ENCODE measurements at regions of chrX and their contacts with region 1.

Region 1: GRCh38 chrX:22748093-22748999 is 251.4 kb upstream of the DDX53 start:
- DNase-seq: peak; percentile 28
- CTCF ChIP-seq: peak; percentile 46

Region 2: DNA sequence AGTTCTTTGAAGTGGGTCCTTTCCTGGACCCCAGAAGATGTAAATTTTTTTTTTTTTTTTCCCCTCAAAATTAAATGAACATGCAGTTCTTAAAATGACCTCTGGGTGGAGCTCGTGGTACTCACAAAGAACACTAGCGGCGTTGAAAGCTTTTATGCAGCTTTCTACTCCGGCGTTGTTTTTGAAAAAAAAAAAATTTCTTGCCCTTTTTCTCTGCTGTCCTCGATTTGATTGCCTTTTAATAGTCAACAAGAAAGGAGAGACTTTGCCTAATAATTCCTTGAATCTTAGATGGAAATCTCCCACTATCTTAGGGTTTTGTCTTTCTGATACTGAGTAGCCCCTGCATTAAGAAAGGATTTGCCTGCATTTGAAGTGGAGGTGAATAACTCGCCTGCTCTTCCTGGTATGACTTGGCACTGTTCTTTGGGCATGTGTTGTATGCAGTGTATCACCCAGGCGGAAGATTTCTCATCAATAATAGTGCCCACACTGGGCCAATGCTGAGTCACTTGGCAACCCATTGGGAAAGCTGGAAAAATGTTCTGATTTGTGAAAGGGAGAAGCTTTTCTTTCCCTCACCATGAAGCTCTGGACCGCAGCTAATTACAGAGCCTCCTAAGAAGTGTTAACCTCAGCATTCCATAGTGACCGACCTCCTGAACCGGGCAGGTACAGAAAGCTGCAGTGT is 612.2 kb before region 1 on chrX:
- CTCF ChIA-PET with region 1: interaction called, 26 read pairs
- POLR2A ChIA-PET with region 1: no interaction called
- DNase-seq: peak; percentile 25
- CTCF ChIP-seq: peak; percentile 31

Region 3: DNA sequence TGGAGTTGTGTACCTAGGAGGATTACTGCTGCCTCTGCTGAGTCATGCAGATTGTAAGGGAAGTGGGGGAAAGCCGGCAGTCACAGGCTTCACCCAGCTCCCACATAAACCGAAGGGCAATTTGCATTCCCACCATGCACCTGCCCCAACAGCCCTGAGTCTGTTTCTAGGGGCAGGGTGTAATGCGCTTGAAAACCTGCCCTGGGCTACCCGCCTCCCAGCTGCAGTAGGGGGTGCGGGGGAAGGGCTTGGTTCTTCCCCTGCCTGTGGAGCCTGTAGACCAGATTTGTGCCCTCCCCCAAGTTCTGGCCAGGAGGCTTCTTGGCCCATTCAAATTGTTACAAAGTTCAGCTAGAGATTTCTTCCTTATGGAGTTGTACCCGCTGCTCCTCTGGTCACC is 17.8 kb before region 1 on chrX:
- CTCF ChIA-PET with region 1: interaction called, 11 read pairs
- POLR2A ChIA-PET with region 1: no interaction called
- DNase-seq: no peak
- CTCF ChIP-seq: no peak

Region 4: GRCh38 chrX:22758807-22759481 is 10.6 kb after region 1 on chrX:
- CTCF ChIA-PET with region 1: interaction called, 12 read pairs
- POLR2A ChIA-PET with region 1: no interaction called
- DNase-seq: no peak
- CTCF ChIP-seq: no peak